ENCODE measurements at regions of chrX and their contacts with region 1.

Region 1: DNA sequence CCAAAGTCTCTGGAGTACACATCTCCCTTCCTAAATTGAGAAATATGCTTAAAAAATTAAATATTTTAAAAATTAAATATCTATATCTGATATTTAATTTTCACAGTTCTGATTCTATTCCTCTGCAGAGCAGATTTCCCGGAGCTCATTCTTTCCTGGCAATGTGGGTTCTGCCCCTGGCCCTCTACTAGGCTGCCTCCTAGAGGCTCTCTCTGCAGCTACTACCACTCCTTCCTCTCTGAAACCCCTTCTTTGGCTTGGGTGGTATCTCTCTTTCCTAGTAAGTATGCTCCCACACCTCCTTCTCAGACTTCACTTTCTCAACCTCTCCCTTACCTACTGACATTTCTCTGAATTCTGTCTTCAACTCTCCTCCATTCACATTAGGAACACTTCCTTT is 45.3 kb downstream of the RPGR start:
- DNase-seq: no peak
- H3K4me3 ChIP-seq: no peak overlapping the region
- H3K4me3 Mint-ChIP-seq: no peak overlapping the region
- H3K27ac Mint-ChIP-seq: no peak overlapping the region
- H3K4me1 ChIP-seq: peaks cover 16% of the 10 kb centered on the region
- H3K4me1 Mint-ChIP-seq: no peaks in the 10 kb centered on the region
- H3K27me3 ChIP-seq: no peaks in the 10 kb centered on the region
- H3K27me3 Mint-ChIP-seq: peaks cover 3% of the 10 kb centered on the region
- CTCF ChIP-seq: peak in 1 of 2 experiments; percentile 45

Region 2: DNA sequence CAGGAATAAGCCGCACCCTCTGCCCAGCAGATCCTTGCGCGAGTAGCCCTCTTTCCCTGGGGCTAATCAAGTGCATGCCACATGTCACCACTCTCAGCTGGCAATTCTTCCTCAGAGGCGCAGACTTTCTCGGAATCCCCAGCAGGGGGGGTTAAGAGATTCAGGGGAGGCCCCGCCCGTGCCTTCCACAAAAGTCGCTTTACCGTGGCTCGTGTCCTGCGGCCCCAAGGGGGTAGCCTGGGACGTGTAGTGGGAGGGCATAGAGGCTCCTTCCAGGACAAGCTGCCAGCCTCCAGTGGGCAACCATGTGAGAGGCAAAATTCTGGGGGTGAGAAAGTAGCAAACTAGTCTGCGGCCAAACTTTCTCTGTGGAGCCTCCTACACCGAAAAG is 62.0 kb before region 1 on chrX:
- CTCF ChIA-PET with region 1: interaction called, 12 read pairs
- POLR2A ChIA-PET with region 1: no interaction called
- intact Hi-C with region 1: no loop called
- DNase-seq: peak; percentile 59 to 63
- H3K4me3 ChIP-seq: peak overlapping the region; percentile 49
- H3K4me3 Mint-ChIP-seq: peak overlapping the region; percentile 65
- H3K27ac Mint-ChIP-seq: no peak overlapping the region
- H3K4me1 ChIP-seq: no peaks in the 10 kb centered on the region
- H3K4me1 Mint-ChIP-seq: no peaks in the 10 kb centered on the region
- H3K27me3 ChIP-seq: no peaks in the 10 kb centered on the region
- H3K27me3 Mint-ChIP-seq: peaks cover 7% of the 10 kb centered on the region
- CTCF ChIP-seq: peak; percentile 23 to 42

Region 3: GRCh38 chrX:38236901-38237615 is 45.0 kb before region 1 on chrX:
- CTCF ChIA-PET with region 1: no interaction called
- POLR2A ChIA-PET with region 1: no interaction called
- intact Hi-C with region 1: no loop called
- DNase-seq: no peak
- H3K4me3 ChIP-seq: no peak overlapping the region
- H3K4me3 Mint-ChIP-seq: no peak overlapping the region
- H3K27ac Mint-ChIP-seq: no peak overlapping the region
- H3K4me1 ChIP-seq: no peaks in the 10 kb centered on the region
- H3K4me1 Mint-ChIP-seq: peaks cover 8% of the 10 kb centered on the region
- H3K27me3 ChIP-seq: no peaks in the 10 kb centered on the region
- H3K27me3 Mint-ChIP-seq: peaks cover 16% of the 10 kb centered on the region
- CTCF ChIP-seq: no peak

Region 4: GRCh38 chrX:38260231-38260630 is 21.8 kb before region 1 on chrX:
- CTCF ChIA-PET with region 1: interaction called, 13 read pairs
- POLR2A ChIA-PET with region 1: no interaction called
- intact Hi-C with region 1: no loop called
- DNase-seq: peak; percentile 49 to 57
- H3K4me3 ChIP-seq: no peak overlapping the region
- H3K4me3 Mint-ChIP-seq: no peak overlapping the region
- H3K27ac Mint-ChIP-seq: no peak overlapping the region
- H3K4me1 ChIP-seq: no peaks in the 10 kb centered on the region
- H3K4me1 Mint-ChIP-seq: peaks cover 6% of the 10 kb centered on the region
- H3K27me3 ChIP-seq: no peaks in the 10 kb centered on the region
- H3K27me3 Mint-ChIP-seq: peaks cover 3% of the 10 kb centered on the region
- CTCF ChIP-seq: peak; percentile 43 to 55

Measured in Caco-2 (cell line).